ENCODE measurements at regions of chr9 and their contacts with region 1.

Region 1: GRCh38 chr9:131125128-131126058 is at the start of gene NUP214:
- DNase-seq: peak; percentile 99 to 100
- ATAC-seq: peak; percentile 99 to 100 (median 99)
- H3K4me3 ChIP-seq: peak within 1 kb of the TSS; percentile 100
- H3K27ac ChIP-seq: peak within 1 kb of the TSS; percentile 90
- H3K4me1 ChIP-seq: peaks cover 17% of the 10 kb centered on the region
- H3K27me3 ChIP-seq: no peaks in the 10 kb centered on the region
- CTCF ChIP-seq: no peak
- total RNA-seq, gene NUP214: 20.1 to 28.1 (median 23.4) TPM

Region 2: GRCh38 chr9:131056781-131057506 is 68.4 kb before region 1 on chr9:
- intact Hi-C with region 1: loop called in 1 of 2 experiments (anchors 2 kb)
- DNase-seq: no peak
- ATAC-seq: no peak
- H3K4me3 ChIP-seq: no peak overlapping the region
- H3K27ac ChIP-seq: no peak overlapping the region
- H3K4me1 ChIP-seq: no peaks in the 10 kb centered on the region
- H3K27me3 ChIP-seq: peaks cover 0 to 16% (median 0%) of the 10 kb centered on the region in 3 donors
- CTCF ChIP-seq: no peak

Measured in psoas muscle (tissue), 8 donors.